Caco-2 (cell line): ENCODE measurements at regions of chr20 and their contacts with region 1.

Region 1: DNA sequence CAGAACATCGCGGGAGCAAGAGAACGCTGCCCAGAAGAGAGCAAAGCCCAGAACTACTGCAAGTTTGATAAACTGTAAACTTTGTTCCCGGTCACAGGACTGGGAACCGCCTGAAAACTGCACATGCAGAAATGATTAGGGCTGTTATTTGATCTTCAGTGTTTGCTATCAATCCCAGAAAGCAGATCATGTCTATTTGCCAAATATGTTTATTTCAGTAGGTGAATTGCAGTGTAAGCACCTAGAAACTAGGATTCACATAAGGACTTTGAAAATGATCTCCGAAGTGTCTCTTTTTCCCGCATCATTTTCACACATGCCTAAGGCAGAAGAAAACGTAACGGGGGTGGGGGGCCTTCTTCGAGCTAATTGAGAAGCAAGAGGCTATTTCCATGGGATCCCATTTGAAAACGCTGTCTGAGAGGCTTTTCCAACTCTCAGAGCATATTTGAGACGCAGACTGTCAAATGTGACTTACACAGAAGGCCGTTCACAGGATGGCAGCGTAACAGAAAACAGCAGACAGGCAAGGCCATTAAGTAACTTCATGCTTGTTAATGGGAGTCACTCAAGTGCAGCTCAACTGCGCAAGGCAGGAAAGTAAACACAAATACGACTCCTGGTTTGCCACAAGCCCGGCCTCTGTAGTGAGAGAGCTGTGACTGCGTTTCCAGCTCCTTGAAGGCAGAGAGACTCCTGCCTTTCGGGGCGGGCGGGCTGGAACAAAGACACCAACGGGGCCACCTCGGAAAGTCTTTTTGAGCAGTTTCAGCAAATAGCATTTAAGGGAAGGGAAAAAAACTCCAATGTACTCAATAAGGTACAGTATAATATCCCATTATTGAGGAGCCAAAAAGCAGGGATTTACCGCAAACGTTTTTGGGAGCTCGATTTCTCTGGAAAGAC is 144.7 kb upstream of the ZNF217 start:
- DNase-seq: peak; percentile 94 to 97
- H3K4me3 ChIP-seq: peak overlapping the region; percentile 35
- H3K4me3 Mint-ChIP-seq: peak overlapping the region; percentile 72
- H3K27ac Mint-ChIP-seq: peak overlapping the region; percentile 95
- H3K4me1 ChIP-seq: peaks cover 67% of the 10 kb centered on the region
- H3K4me1 Mint-ChIP-seq: peaks cover 68% of the 10 kb centered on the region
- H3K27me3 ChIP-seq: no peaks in the 10 kb centered on the region
- H3K27me3 Mint-ChIP-seq: no peaks in the 10 kb centered on the region
- CTCF ChIP-seq: no peak

Region 2: GRCh38 chr20:53282217-53282955 is 455.9 kb before region 1 on chr20:
- CTCF ChIA-PET with region 1: no interaction called
- POLR2A ChIA-PET with region 1: no interaction called
- intact Hi-C with region 1: no loop called
- DNase-seq: no peak
- H3K4me3 ChIP-seq: no peak overlapping the region
- H3K4me3 Mint-ChIP-seq: no peak overlapping the region
- H3K27ac Mint-ChIP-seq: no peak overlapping the region
- H3K4me1 ChIP-seq: no peaks in the 10 kb centered on the region
- H3K4me1 Mint-ChIP-seq: no peaks in the 10 kb centered on the region
- H3K27me3 ChIP-seq: no peaks in the 10 kb centered on the region; the same call in 1 of the 2 replicates
- H3K27me3 Mint-ChIP-seq: peaks cover 32% of the 10 kb centered on the region
- CTCF ChIP-seq: no peak

Region 3: GRCh38 chr20:53623454-53624211 is 114.7 kb before region 1 on chr20:
- CTCF ChIA-PET with region 1: interaction called, 3 read pairs
- POLR2A ChIA-PET with region 1: interaction called, 18 read pairs
- intact Hi-C with region 1: loop called (anchors 2 kb)
- DNase-seq: peak; percentile 86 to 89
- H3K4me3 ChIP-seq: peak overlapping the region; percentile 41
- H3K4me3 Mint-ChIP-seq: peak overlapping the region; percentile 83
- H3K27ac Mint-ChIP-seq: peak overlapping the region; percentile 97
- H3K4me1 ChIP-seq: peaks cover 33% of the 10 kb centered on the region
- H3K4me1 Mint-ChIP-seq: peaks cover 24% of the 10 kb centered on the region
- H3K27me3 ChIP-seq: no peaks in the 10 kb centered on the region
- H3K27me3 Mint-ChIP-seq: no peaks in the 10 kb centered on the region
- CTCF ChIP-seq: peak in 1 of 2 experiments; percentile 35

Region 4: GRCh38 chr20:53748821-53749421 is 10.6 kb after region 1 on chr20:
- CTCF ChIA-PET with region 1: interaction called, 6 read pairs
- POLR2A ChIA-PET with region 1: interaction called, 10 read pairs
- intact Hi-C with region 1: loop called (anchors 1 kb)
- DNase-seq: no peak
- H3K4me3 ChIP-seq: no peak overlapping the region
- H3K4me3 Mint-ChIP-seq: no peak overlapping the region
- H3K27ac Mint-ChIP-seq: peak overlapping the region; percentile 91
- H3K4me1 ChIP-seq: peaks cover 55% of the 10 kb centered on the region
- H3K4me1 Mint-ChIP-seq: peaks cover 56% of the 10 kb centered on the region
- H3K27me3 ChIP-seq: no peaks in the 10 kb centered on the region
- H3K27me3 Mint-ChIP-seq: no peaks in the 10 kb centered on the region
- CTCF ChIP-seq: no peak

Region 5: GRCh38 chr20:53773792-53774401 is 35.6 kb after region 1 on chr20:
- CTCF ChIA-PET with region 1: interaction called, 3 read pairs
- POLR2A ChIA-PET with region 1: interaction called, 13 read pairs
- intact Hi-C with region 1: loop called (anchors 1 kb)
- DNase-seq: peak; percentile 29 to 52
- H3K4me3 ChIP-seq: no peak overlapping the region
- H3K4me3 Mint-ChIP-seq: peak overlapping the region; percentile 22
- H3K27ac Mint-ChIP-seq: peak overlapping the region; percentile 66
- H3K4me1 ChIP-seq: peaks cover 60% of the 10 kb centered on the region
- H3K4me1 Mint-ChIP-seq: peaks cover 64% of the 10 kb centered on the region
- H3K27me3 ChIP-seq: no peaks in the 10 kb centered on the region
- H3K27me3 Mint-ChIP-seq: no peaks in the 10 kb centered on the region
- CTCF ChIP-seq: no peak

Region 6: DNA sequence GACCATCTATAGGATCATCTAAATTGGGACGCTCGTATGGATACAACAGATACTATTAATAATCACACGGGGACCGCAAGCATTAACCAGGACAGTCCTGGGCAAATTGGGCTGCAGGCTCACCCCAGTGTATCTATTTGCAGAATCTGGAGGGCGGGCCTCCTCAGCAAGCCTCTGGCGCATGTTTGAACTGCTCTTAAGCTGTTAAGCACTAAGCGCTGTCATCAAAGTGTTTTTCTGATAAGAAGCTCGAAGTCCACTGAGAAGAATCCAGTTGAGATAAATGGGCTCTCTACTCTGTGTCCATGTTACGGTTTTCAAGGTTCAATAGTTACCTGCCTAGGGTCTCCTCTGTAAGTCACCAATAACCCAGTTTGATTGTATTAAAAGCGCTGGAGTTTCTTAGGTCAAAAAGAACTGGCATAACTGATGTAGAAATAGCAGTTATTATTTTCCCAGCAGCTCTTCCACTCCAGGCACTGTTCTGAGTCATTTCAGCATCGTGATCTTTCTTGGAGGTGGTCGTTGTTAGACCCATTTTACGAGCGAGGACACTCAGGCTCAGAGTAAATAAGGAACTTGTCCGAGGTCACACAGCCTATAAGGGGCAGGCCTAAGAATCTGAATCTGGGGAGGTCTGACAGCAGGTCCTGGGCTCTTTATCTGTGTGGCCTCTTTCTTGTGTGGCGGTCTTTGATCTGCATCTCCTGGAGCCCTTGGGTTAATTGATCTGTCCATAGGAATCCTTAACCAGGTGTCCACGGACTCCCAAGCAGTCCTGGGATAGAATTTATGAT is 62.7 kb after region 1 on chr20:
- CTCF ChIA-PET with region 1: interaction called, 10 read pairs
- POLR2A ChIA-PET with region 1: interaction called, 5 read pairs
- intact Hi-C with region 1: loop called (anchors 1 kb)
- DNase-seq: peak; percentile 97 to 99
- H3K4me3 ChIP-seq: peak overlapping the region; percentile 21
- H3K4me3 Mint-ChIP-seq: peak overlapping the region; percentile 74
- H3K27ac Mint-ChIP-seq: peak overlapping the region; percentile 95
- H3K4me1 ChIP-seq: peaks cover 54% of the 10 kb centered on the region
- H3K4me1 Mint-ChIP-seq: peaks cover 67% of the 10 kb centered on the region
- H3K27me3 ChIP-seq: no peaks in the 10 kb centered on the region
- H3K27me3 Mint-ChIP-seq: no peaks in the 10 kb centered on the region
- CTCF ChIP-seq: no peak

Region 7: DNA sequence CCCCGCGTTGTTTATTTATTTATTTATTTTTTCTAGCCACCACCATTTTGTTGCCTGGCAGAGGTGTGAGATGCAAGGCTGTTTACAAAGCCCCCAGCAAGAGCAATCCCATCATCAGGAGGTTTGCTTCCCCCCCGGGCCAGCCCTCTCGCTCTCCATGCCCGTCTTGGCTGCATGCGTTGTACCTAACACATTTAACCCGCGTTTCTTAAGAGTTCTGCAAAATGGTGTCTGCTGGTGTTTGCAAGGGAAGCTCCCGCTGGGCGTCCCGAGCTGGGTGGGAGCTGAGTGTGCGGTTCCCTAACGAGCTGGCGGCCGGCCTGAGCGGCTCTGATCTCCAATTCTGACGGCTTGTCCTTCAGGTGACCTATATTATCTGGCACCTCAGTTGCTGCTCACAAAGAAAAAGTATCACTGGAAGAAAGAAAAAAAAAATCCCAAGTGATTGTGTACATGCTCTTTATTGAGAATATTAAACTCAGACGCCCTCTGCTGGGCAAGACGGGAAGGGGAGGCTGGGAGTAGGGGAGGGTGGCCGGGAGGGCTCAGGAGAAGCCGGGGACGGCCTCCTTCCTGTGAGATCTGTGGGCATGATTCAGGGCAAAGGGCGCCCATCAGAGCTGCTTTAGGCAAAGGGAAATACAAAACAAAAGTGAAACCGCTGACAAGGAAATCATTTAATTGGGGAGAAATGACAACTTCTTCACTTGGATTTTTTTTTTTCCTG is 177.3 kb after region 1 on chr20:
- CTCF ChIA-PET with region 1: interaction called, 11 read pairs
- POLR2A ChIA-PET with region 1: interaction called, 5 read pairs
- intact Hi-C with region 1: no loop called
- DNase-seq: peak; percentile 98
- H3K4me3 ChIP-seq: peak overlapping the region; percentile 68
- H3K4me3 Mint-ChIP-seq: peak overlapping the region; percentile 92
- H3K27ac Mint-ChIP-seq: peak overlapping the region; percentile 82
- H3K4me1 ChIP-seq: peaks cover 10% of the 10 kb centered on the region
- H3K4me1 Mint-ChIP-seq: peaks cover 34% of the 10 kb centered on the region
- H3K27me3 ChIP-seq: no peaks in the 10 kb centered on the region
- H3K27me3 Mint-ChIP-seq: no peaks in the 10 kb centered on the region
- CTCF ChIP-seq: peak; percentile 98 to 99

Region 8: GRCh38 chr20:54062812-54063280 is 324.6 kb after region 1 on chr20:
- CTCF ChIA-PET with region 1: no interaction called
- POLR2A ChIA-PET with region 1: no interaction called
- intact Hi-C with region 1: loop called (anchors 10 kb)
- DNase-seq: peak in 1 of 2 experiments; percentile 63
- H3K4me3 ChIP-seq: no peak overlapping the region
- H3K4me3 Mint-ChIP-seq: no peak overlapping the region
- H3K27ac Mint-ChIP-seq: no peak overlapping the region
- H3K4me1 ChIP-seq: peaks cover 19% of the 10 kb centered on the region
- H3K4me1 Mint-ChIP-seq: peaks cover 5% of the 10 kb centered on the region
- H3K27me3 ChIP-seq: no peaks in the 10 kb centered on the region
- H3K27me3 Mint-ChIP-seq: no peaks in the 10 kb centered on the region
- CTCF ChIP-seq: peak; percentile 92